Breast epithelium (tissue), 4 donors: ENCODE measurements at regions of chr1 and their contacts with region 1.

Region 1: DNA sequence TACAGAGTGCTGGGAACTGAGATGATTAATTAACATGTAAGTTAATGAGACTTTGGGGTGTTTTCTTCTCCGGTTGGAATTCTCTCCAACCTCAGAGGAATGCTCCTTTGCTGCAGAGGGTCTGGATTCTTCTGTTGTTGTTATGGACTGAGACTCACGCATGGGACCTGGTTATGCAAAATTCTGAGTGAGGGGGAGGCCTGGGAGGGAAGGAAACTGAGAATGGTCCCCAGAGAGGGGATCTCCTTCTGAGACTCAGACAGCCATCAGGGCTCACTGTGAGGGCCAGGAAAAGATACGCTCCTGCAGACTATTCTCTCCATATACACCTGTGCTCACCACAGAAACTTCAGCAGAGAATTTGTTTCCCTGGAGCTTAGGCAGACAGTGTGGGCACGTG is 56.3 kb downstream of the HTR6 start:
- DNase-seq: no peak
- H3K4me3 ChIP-seq: no peak overlapping the region
- H3K27ac ChIP-seq: no peak overlapping the region
- H3K4me1 ChIP-seq: no peaks in the 10 kb centered on the region
- H3K27me3 ChIP-seq: no peaks in the 10 kb centered on the region
- CTCF ChIP-seq: no peak
- POLR2A ChIP-seq: no peak

Region 2: DNA sequence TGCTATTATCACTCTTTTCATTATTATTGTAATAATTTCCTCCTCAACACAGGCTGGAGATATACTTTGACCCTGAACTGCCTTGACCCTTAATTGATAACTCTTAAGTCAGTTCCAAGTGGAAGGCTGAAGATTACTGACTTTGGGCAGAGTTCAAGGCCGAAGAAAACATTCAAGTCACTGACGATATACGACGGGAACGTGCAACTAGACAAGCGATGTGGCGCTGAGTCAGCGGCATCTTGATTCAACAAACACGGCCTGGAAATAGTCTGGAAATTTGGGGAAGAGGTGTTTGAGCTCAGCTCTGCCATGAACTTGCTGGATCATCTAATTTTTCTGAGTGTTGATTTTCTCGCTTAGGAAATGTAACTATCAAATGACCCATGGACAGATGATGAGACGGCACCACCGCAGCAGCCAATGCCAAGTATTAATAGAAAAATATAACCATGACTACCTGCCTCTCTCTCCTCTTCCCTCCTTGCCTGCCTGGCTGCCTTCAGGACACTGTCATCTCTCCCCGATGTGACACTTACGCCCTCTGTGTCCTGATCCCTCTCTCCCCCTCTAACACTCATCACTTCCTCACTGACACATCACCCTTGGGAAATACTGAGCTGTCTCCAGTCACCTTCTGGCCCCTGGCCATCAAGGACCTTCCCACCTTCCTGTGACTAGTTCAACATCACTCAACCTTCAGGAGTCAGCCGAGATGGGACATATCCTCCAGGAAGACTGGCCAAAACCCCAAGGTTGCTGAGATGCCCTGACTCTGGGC is 29.3 kb after region 1 on chr1:
- intact Hi-C with region 1: loop called (anchors 2 kb)
- DNase-seq: no peak
- H3K4me3 ChIP-seq: no peak overlapping the region
- H3K27ac ChIP-seq: no peak overlapping the region
- H3K4me1 ChIP-seq: no peaks in the 10 kb centered on the region
- H3K27me3 ChIP-seq: no peaks in the 10 kb centered on the region
- CTCF ChIP-seq: no peak
- POLR2A ChIP-seq: no peak